GM18951 (cell line): ENCODE measurements at regions of chr7 and their contacts with region 1.

Region 1: GRCh38 chr7:151448261-151449252 is 8.6 kb upstream of the CRYGN start:
- POLR2A ChIP-seq: no peak

Region 2: GRCh38 chr7:150927956-150928344 is 520.6 kb before region 1 on chr7:
- in situ Hi-C with region 1: no loop called
- POLR2A ChIP-seq: no peak

Region 3: GRCh38 chr7:151304856-151305255 is 143.7 kb before region 1 on chr7:
- in situ Hi-C with region 1: loop called (anchors 10 kb)
- POLR2A ChIP-seq: no peak

Region 4: DNA sequence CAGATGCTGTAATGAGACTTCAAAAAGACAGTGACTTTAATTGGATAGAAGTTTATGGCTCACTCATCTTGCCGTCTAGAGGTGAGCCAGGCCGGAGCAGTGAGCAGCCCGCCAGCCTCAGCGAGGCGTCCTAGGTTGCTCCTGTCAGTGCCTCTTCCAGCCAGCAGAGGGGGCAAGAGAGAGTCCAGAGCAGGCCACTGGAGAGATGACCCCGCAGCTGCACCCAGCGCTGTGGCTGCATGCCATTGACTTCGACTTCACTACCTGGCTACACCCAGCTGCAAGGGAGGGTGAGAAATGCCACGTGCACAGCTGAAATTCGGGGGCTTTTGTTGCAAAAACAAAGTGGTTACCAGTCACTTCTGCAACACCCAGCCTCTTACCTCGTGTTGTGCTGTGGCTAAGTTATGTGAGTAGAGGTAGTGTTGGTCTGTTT is 80.4 kb before region 1 on chr7:
- in situ Hi-C with region 1: loop called (anchors 10 kb)
- POLR2A ChIP-seq: no peak

Region 5: DNA sequence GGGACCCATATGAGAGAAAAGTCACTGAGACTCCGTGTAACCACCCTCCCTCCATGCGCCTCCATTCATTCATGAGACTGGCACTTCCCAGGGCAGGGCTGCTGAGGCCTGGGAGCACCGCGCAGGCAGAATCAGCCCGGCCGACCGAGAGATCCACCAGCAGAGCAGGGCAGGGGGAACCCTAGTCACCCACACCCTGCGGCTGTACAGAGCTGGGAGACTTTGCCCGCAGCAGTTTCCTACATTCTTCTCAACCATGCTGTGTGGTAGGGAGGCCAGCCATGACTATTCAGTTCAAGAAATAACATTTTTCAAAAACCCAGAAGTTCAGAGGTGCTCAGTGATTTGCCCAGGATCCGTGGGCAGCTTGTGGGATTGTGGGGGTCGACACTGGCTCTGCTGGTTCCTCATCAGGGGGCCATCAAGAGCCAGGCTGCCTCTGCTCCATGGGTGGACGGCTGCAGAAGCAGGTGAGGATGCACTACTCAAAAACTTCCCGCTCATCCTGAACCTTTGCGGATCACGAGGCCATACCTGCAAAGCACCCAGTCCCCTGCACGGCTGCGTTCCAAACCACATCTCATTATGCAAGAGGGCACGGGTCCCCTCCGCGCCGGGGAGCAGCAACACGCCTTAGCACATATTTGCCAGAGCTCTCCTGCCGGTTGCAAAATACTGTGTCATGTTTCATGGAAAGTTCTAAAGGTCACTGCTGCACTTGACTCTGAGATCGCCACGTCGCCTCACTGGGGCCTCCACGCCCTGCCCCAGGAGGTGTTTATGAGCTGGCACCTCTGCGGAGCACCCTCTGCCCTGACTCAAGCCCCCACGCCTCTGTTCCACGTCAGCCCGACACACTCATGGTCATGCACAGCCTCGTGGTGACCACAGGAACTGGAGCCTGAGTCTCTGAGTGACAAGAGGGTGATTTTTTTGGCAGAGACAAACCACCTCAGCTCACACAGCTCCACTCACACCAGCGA is 296.4 kb after region 1 on chr7:
- in situ Hi-C with region 1: no loop called
- POLR2A ChIP-seq: no peak